Posterior cingulate gyrus (tissue), 11 donors: ENCODE measurements at regions of chr10 and their contacts with region 1.

Region 1: GRCh38 chr10:110871298-110872084 is at the start of gene PDCD4:
- DNase-seq: peak; percentile 99 to 100 (median 100)

Region 2: DNA sequence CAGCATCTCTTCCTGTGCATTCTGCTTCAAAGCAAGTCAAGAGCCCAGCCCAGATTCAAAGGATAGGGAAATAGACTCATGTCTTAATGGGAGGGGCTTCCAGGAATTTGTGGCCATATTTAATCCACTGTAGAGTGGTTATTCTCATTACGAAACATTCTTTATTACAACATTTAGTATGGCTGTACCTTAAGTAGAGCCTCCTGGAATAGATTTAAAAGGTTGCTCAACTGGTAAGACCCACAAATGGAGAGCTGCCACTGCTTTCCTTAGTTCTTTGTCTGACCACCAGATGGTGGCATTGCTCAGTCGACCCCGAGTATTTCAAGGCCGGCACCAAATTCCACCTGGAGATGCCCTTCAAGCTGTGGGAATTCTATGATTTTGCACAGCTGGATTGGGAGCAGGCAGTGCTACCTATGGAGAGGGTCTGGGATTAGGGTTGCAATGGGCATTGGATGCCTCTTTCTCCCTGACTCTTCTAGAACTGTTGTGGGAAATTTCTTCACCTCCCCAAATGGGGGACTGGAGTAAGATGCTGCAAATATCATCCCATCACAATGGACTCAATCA is 125.2 kb before region 1 on chr10:
- intact Hi-C with region 1: loop called (anchors 5 kb)
- DNase-seq: peak; percentile 18 to 91 (median 60)

Region 3: DNA sequence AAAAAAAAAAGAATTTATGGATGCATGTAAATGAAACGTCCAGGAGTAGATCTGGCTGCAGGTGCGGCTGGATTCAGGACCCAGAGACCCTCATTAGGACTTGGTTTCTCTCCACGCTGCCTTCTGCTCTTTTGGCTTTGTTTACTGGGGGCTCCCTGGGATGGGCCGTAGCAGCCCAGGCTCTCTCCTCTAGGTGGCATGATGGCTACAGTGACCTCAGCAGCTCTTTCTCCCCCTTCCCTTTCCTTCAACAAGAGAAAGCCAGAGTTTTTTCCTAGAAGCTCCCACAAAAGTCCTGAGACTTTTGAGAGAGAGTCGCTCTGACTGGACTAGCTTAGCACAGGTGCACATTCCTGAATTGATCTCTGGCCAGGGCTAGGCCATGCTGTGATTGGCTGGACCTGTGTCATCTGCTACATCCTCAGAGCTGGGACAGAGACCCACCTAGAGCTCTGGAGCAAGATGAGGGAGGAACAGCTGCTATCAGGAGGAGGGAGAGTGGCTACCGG is 67.6 kb before region 1 on chr10:
- intact Hi-C with region 1: loop called (anchors 5 kb)
- DNase-seq: peak in 5 of 10 donors; percentile 38 to 89 (median 52)

Region 4: DNA sequence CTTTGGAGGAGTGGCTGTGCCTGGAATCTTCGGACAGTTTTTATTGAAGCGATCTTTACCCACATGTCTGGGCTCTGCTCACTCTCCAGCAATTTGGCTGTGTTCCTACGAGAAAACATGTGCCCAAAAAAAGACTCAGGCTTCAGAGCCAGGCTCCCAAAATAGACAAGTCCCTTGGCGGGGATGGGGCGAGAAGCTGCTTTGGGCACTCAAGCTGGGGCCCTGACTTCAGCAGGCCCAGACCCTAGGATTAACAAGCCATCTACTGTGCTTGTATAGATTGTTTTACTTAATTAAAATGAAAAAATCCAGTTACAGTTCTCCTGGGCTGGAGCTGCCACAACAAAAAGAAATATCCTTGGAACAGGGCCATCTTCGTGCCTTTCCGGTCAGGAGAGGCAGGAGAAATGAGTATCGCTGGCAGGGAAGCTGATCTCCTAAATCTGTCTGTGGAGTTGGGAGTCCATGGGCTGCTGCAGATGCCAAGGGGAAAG is 51.1 kb before region 1 on chr10:
- intact Hi-C with region 1: loop called (anchors 5 kb)
- DNase-seq: peak in 8 of 10 donors; percentile 44 to 94 (median 63)

Region 5: GRCh38 chr10:110893559-110894179 is 22.2 kb after region 1 on chr10:
- intact Hi-C with region 1: no loop called
- DNase-seq: no peak

Region 6: DNA sequence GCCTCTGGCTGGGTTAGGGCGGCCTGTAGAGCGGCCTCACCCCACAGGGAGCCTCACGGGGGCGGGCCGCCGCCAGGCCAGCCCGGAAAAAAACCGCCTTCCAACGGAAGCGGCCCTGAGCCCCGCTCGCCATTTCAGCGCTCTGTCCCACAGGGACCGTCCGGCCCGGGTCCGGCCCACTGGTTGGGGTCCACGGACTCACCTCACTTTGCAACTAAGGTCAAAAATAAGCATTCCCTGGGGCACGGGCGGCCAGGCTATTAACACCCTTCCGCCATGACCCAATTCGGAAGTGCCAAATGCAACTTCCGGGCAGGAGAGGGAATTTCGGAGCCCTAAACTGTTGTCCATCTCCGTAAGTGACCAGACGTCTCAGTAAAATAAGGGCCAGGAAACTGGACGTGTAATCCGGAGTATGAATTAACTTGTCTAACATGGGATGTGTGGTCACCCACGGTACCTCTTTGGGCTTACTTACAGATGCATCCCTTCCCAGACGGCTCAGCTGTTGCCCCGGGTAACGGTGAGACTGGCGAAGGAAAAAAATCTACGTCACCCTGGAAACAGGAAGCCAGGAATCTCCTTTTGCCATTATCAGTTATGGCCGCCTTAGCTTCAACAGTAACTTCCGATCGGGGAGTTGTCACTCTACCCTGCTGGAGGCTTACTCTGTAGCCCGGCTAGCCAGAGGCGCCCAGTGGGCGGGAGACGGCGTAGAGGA is 47.3 kb after region 1 on chr10 and contains the start of gene BBIP1:
- intact Hi-C with region 1: loop called (anchors 1 kb)
- DNase-seq: peak in 3 of 10 donors; percentile 78 to 97 (median 81)